Cardiac septum (tissue), 1 donor: ENCODE measurements at regions of chr1 and their contacts with region 1.

Region 1: DNA sequence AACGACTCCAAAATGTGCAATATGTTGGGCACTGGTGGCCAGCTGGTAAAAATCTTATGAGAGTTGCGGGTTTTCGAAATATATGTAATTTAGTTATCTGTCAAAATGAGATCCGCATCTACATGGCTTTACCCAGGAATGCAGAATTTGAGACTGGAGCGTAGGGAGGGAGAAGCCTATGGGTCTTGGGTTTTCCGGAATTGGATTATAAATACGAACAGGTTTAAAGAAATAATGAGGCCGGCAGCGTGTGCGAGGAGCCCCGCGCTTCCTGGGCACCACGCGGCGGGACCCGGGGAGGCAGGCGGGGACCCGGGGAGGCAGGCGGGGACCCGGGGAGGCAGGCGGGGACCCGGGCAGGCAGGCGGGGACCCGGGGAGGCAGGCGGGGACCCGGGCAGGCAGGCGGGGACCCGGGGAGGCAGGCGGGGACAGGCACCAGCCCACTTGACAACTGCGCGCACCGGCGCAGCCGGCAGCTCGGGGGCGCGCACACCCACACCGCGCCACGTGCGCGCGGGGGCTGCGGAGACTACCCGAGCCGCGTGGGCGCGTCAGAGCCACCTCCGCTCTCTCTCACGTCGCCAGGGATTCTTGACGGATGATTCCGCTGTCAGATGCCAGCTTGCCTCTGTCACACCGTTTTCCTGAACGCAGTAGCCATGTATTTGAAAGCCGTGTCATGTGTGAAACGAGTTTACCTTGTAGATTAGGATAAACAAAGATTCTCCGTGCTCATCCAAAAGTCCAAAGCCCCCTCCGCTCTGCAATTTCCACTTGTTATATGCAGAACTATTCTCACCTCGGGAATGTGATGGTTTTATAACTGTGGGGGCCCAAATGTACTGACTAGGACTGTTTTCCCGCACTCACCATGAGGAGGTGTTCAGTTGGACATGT is 54.3 kb upstream of the HNRNPU start:
- DNase-seq: peak; percentile 83

Region 2: GRCh38 chr1:244957525-244957924 is 38.9 kb after region 1 on chr1:
- intact Hi-C with region 1: loop called (anchors 5 kb)
- DNase-seq: no peak

Region 3: GRCh38 chr1:245051349-245052221 is 132.9 kb after region 1 on chr1:
- intact Hi-C with region 1: no loop called
- DNase-seq: peak; percentile 79